ENCODE measurements at regions of chr2 and their contacts with region 1.

Region 1: GRCh38 chr2:60550178-60550983 is 3.1 kb downstream of the BCL11A start:
- DNase-seq: peak; percentile 68
- ATAC-seq: peak; percentile 56
- H3K4me3 Mint-ChIP-seq: peak overlapping the region; percentile 96
- H3K27ac Mint-ChIP-seq: peak overlapping the region; percentile 98
- H3K4me1 Mint-ChIP-seq: peaks cover 41% of the 10 kb centered on the region
- H3K27me3 Mint-ChIP-seq: no peaks in the 10 kb centered on the region
- CTCF ChIP-seq: peak; percentile 32

Region 2: DNA sequence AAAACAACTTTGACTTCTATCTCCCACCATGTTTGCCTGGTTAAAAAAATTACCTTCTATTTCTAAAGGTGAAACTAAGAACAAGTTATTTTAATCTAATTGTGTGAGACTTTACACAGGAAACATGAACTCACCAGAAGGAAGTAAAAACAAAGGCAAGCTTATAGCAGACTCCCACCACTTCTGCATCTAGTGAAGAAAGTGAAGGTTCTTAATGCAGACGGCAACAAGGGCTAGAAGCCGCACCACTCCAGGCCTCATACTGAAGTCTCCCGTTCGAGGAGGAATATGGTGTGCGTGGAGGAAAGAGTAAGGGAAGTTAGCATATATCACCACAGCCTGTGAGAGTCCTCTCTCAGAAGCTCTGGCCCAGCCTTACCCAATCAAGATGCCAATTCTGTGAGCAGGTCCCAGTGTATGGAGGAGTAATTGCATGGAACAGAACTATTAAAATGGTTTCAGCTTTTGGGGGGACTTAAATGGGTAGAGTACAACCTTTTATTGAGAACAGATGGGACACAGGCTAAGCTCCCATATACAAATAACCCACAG is 955.6 kb before region 1 on chr2:
- CTCF ChIA-PET with region 1: no interaction called
- POLR2A ChIA-PET with region 1: interaction called, 3 read pairs
- intact Hi-C with region 1: loop called (anchors 5 kb)
- DNase-seq: no peak
- ATAC-seq: peak; percentile 18
- H3K4me3 Mint-ChIP-seq: peak overlapping the region; percentile 65
- H3K27ac Mint-ChIP-seq: peak overlapping the region; percentile 77
- H3K4me1 Mint-ChIP-seq: peaks cover 19% of the 10 kb centered on the region
- H3K27me3 Mint-ChIP-seq: no peaks in the 10 kb centered on the region
- CTCF ChIP-seq: no peak

Region 3: DNA sequence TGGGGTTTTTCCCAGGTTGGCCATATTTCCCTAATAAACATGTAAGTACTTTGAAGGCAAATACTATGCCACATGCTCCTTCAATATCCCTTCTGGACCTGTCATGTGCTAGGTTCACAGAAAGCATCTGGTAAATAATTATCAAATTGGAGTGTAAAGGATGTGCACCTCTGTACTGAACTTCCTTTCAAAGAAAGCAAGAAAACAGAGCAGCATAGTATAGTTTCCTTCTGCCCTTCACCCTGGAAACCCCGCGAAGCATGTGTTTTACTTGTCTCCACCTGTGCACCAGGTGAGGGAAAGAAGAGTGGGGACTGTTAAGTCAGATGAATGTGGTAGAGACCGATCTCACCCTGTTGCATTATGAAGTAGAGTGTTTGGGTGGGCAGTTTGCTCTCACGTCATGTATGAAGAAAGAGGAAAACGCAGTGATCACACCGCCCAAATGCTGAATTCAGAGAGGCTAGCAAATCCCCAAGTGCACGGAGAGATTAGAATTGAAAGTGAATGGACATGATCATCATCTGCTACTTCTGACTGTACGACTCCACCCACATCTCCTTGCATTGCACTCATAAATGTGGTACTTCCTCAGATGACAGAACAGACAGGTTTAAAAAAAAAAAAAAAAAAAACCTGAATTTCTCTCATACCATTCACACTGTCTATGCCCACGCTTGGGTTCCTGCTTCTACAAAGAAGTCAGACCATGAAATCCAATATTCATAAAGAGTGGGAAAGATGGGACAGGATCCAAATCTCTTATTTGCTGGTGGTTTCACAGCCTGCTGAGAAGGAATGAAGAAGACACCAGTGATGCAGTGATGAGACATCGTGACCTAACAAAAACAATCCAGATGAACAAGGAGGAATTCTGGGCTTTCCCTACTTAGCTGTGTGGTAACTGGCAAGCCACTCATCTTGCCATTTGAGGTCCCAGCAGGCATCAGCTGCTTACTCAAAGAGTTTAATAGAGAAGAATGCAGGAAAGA is 445.6 kb before region 1 on chr2:
- CTCF ChIA-PET with region 1: no interaction called
- POLR2A ChIA-PET with region 1: no interaction called
- intact Hi-C with region 1: loop called (anchors 5 kb)
- DNase-seq: no peak
- ATAC-seq: peak; percentile 91
- H3K4me3 Mint-ChIP-seq: peak overlapping the region; percentile 83
- H3K27ac Mint-ChIP-seq: peak overlapping the region; percentile 79
- H3K4me1 Mint-ChIP-seq: peaks cover 23% of the 10 kb centered on the region
- H3K27me3 Mint-ChIP-seq: no peaks in the 10 kb centered on the region
- CTCF ChIP-seq: no peak

Region 4: DNA sequence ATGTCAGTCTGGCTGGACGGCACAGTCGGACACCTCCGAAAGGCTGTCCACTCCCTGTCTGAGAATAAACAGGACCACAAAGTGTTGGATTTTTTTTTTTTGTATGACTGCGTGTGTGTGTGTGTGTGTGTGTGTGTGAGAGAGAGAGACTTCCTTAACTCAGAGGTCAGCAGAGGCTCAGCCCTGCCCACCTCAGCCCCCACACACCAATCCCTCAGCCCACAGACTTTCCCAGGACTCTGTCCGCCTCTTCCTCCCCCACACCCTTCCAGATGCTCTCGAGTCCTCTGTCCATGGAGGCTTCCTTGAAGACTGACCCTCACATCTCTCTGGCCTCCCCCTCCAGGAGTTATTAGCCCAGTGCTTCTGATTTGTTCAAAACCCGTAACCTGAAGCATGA is 144.2 kb before region 1 on chr2:
- CTCF ChIA-PET with region 1: interaction called, 8 read pairs
- POLR2A ChIA-PET with region 1: interaction called, 10 read pairs
- intact Hi-C with region 1: no loop called
- DNase-seq: no peak
- ATAC-seq: no peak
- H3K4me3 Mint-ChIP-seq: no peak overlapping the region
- H3K27ac Mint-ChIP-seq: peak overlapping the region; percentile 62
- H3K4me1 Mint-ChIP-seq: peaks cover 81% of the 10 kb centered on the region
- H3K27me3 Mint-ChIP-seq: no peaks in the 10 kb centered on the region
- CTCF ChIP-seq: no peak

Region 5: GRCh38 chr2:60498816-60499429 is 51.5 kb before region 1 on chr2:
- CTCF ChIA-PET with region 1: interaction called, 10 read pairs
- POLR2A ChIA-PET with region 1: interaction called, 44 read pairs
- intact Hi-C with region 1: loop called (anchors 1 kb)
- DNase-seq: peak; percentile 40
- ATAC-seq: peak; percentile 64
- H3K4me3 Mint-ChIP-seq: peak overlapping the region; percentile 64
- H3K27ac Mint-ChIP-seq: peak overlapping the region; percentile 84
- H3K4me1 Mint-ChIP-seq: peaks cover 99% of the 10 kb centered on the region
- H3K27me3 Mint-ChIP-seq: no peaks in the 10 kb centered on the region
- CTCF ChIP-seq: no peak

Region 6: DNA sequence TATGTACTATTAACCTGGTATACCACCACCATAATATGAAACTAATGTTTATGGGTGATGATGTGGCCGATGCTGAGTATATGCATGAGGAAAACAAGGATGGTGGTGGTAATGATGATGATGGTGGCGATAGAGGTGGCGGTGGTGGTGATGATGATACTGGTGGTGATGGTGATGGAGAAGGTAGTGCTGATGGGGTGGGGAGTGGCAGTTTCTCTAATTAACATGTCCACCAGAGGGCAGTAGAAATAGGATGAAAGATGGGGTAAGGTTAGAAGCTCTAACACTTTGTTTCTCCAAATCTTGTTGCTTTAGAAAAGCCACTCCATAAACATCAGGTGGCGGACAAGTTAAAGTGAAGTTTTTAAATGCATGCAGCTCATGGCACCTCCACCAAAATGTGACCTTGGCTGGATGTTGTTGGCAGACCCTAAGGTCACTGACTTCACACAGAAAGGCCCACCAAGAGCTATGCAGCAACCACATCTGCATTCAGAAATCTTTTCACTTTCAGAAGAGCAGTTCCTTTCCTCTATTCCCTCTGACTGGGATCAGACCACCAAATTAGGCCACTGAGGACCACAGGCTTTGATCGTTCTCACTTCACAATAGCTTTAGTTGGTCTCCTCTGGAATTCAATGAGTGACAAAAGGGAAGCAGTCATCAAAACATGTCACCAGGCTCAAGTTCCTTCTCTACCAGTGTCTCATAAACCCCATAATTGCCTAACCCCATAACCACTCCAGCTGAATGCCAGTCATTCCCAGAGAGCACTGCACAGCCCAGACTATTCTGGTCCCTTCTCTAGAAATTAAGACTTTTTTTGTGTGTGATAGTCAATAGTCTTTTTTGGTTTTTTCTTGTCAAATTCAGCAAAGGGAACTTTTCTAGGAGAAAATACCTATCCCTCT is 10.6 kb after region 1 on chr2:
- CTCF ChIA-PET with region 1: interaction called, 25 read pairs
- POLR2A ChIA-PET with region 1: interaction called, 22 read pairs
- intact Hi-C with region 1: no loop called
- DNase-seq: no peak
- ATAC-seq: peak; percentile 44
- H3K4me3 Mint-ChIP-seq: no peak overlapping the region
- H3K27ac Mint-ChIP-seq: no peak overlapping the region
- H3K4me1 Mint-ChIP-seq: peaks cover 46% of the 10 kb centered on the region
- H3K27me3 Mint-ChIP-seq: no peaks in the 10 kb centered on the region
- CTCF ChIP-seq: peak; percentile 20